Motor neuron (in vitro differentiated cells): ENCODE measurements at regions of chr2 and their contacts with region 1.

Region 1: DNA sequence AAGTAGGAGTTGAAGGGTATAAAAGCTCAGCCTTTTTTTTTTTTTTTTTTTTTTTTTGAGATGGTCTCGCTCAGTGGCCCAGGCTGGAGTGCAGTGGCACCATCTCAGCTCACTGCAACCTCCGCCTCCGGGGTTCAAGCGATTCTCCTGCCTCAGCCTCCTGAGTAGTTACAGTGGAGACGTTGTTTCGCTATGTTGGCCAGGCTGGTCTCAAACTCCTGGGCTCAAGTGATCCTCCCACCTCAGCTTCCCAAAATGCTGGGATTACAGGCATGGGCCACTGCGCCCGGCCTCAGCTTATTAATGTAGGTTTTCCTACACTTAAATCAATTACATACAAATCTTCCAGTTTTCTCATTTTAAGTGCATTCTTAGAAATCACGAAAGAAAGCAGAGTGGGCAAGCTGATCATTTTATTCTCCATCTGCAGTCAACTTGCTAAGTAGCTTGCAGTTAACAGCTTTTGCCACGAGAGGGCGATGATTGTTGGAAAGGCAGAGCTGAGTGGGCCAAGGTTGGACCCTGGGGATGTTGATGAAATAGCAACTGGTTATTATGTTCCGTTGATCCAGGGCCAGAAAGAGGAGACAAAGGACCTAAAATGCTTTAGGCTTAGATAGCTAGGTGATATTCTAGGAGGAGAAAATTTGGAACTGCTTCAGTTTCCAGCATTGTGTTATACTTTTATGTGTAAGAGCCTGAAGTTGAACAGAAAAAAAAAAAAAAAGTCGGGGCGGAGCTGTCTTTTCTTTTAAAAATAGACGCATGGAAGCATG is 234.4 kb upstream of the EPAS1 start:
- ATAC-seq: peak in 7 of 8 experiments; percentile 48 to 80 (median 60)
- H3K4me3 ChIP-seq: no peak overlapping the region
- H3K27ac ChIP-seq: no peak overlapping the region
- H3K4me1 ChIP-seq: no peaks in the 10 kb centered on the region

Region 2: DNA sequence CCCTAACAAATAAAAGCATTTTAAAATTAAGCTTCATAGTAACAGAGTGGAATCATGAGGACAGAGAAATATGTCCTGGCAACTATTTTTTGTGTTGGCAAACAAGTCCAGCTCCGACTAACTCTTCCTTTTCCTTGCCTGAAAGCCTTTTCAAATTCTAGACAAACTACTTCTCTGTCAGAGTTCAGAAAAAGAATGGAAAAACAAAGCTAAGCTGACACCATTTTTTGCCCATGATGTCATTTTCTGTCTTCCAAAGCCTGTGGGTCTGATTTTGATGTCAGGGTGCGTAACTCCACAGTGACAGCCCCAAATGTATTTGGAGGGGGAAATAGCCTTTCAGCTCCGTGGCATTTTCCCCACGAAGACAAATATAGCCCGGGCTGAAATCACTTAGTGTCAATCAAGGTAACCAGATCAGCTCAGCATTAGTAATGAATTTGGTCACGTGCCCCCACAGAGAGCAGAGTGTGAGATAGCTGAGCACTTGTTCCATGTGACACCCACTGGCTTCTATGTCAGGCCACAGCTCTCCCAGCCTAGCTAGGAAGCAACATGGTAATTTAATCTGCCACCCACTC is 820.6 kb before region 1 on chr2:
- in situ Hi-C with region 1: no loop called
- ATAC-seq: peak in 5 of 8 experiments; percentile 93 to 99 (median 99)
- H3K4me3 ChIP-seq: no peak overlapping the region
- H3K27ac ChIP-seq: no peak overlapping the region
- H3K4me1 ChIP-seq: peaks cover 12 to 25% of the 10 kb centered on the region in 2 donors

Region 3: GRCh38 chr2:46296840-46297545 is 234.2 kb after region 1 on chr2 and contains the start of gene EPAS1:
- in situ Hi-C with region 1: loop called in 1 of 9 experiments (anchors 25 kb)
- ATAC-seq: peak; percentile 75 to 92 (median 83)
- H3K4me3 ChIP-seq: peak within 1 kb of the TSS; percentile 21 to 37 (median 28)
- H3K27ac ChIP-seq: no peak within 1 kb of the TSS
- H3K4me1 ChIP-seq: peaks cover 7 to 14% of the 10 kb centered on the region in 2 donors
- total RNA-seq, gene EPAS1: 0.11 to 6.9 (median 1.7) TPM